ENCODE measurements at regions of chr2 and their contacts with region 1.

Region 1: GRCh38 chr2:203814661-203815540 is 52.7 kb upstream of the CTLA4 start:
- DNase-seq: peak; percentile 72
- H3K4me3 ChIP-seq: no peak overlapping the region
- H3K27ac ChIP-seq: peak overlapping the region in 1 of 4 donors; percentile 7
- H3K4me1 ChIP-seq: peaks cover 0 to 12% (median 5%) of the 10 kb centered on the region in 4 donors
- H3K27me3 ChIP-seq: no peaks in the 10 kb centered on the region
- CTCF ChIP-seq: peak; percentile 18 to 67 (median 64)
- EP300 ChIP-seq: no peak
- POLR2A ChIP-seq: no peak

Region 2: DNA sequence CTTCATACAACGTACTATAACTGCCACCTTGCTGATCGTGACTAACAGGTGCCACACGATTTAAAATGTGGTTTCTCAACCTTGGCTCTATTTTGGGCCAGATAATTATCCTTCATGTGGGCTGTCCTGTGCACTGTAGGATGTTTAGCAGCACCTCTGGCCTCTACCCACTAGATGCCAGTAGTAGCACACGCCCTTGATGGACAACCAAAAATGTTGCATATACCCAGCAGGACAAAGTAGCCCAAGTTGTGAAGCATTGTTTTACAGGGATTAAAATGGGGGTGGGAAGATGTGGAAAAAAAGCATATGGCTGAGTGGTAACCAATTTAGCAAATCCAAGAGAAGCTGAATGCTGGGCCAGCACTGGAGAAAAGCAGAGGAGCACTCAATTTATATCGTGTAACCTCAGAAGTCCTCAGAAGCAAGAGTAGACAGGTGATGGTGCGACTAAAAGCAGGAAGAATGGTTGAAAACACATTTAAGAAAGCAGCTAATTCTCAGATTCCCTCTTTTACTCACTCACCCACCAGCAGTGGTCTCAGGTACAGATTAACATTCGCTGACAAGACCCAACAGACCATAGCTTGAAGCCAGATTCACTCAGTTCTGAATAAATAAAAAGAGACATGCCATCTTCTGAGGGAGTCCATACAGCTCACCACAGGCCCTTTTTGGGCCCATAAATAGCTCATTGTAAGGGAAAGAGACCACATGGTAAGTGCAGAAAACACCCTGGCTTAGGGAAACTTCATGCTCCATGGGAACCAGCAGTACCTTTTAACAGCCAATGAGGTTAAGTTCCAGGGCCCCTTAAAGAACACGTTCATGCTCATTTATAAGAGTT is 330.4 kb before region 1 on chr2:
- intact Hi-C with region 1: loop called (anchors 5 kb)
- DNase-seq: no peak
- H3K4me3 ChIP-seq: no peak overlapping the region
- H3K27ac ChIP-seq: no peak overlapping the region
- H3K4me1 ChIP-seq: no peaks in the 10 kb centered on the region
- H3K27me3 ChIP-seq: no peaks in the 10 kb centered on the region
- CTCF ChIP-seq: peak; percentile 53 to 55 (median 53)
- EP300 ChIP-seq: no peak
- POLR2A ChIP-seq: no peak

Region 3: GRCh38 chr2:203909261-203909967 is 94.5 kb after region 1 on chr2:
- intact Hi-C with region 1: loop called (anchors 10 kb)
- DNase-seq: no peak
- H3K4me3 ChIP-seq: peak overlapping the region in 3 of 4 donors; percentile 13 to 31 (median 22)
- H3K27ac ChIP-seq: peak overlapping the region; percentile 21 to 60 (median 36)
- H3K4me1 ChIP-seq: peaks cover 0 to 18% (median 15%) of the 10 kb centered on the region in 4 donors
- H3K27me3 ChIP-seq: no peaks in the 10 kb centered on the region
- CTCF ChIP-seq: peak; percentile 61 to 80 (median 65)
- EP300 ChIP-seq: no peak
- POLR2A ChIP-seq: no peak

Measured in sigmoid colon (tissue), 7 donors.